ENCODE measurements at regions of chr16 and their contacts with region 1.

Region 1: DNA sequence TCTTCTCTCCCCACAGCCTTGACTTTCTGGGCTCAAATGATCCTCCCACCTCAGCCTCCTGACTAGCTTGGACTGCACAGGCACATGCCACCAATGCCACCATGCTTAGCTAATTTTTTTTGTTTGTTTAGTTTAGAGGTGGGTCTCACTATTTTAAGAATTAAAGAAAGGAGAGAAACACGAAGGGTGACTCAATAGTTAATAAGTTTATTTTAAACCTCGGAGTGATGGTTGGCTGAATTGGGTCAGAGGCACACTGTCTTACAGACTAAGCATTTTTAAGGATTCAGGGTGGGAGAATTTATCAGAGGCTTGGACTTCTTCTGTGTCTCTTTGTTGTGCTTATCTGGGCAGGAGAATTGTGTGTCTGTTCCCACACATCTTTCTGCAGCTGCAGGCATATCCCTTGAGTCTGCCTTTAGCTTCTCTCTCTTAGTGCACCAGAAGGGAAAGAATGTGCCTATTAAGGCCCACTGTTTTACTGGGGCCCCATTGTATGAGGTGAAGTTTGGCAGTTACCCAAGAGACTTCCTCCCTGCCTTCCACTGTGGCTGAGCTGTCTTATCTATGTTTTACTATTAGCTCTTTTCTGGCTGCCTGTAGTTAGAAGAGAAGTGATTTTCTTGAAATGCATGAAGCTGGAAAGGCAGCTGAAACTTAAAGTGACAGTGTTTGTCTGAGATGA is 2172.0 kb downstream of the TP53TG3F start:
- DNase-seq: no peak
- H3K4me3 ChIP-seq: no peak overlapping the region
- H3K27ac ChIP-seq: no peak overlapping the region
- H3K4me1 ChIP-seq: no peaks in the 10 kb centered on the region
- H3K27me3 ChIP-seq: no peaks in the 10 kb centered on the region
- CTCF ChIP-seq: no peak

Region 2: GRCh38 chr16:35325936-35326335 is 305.5 kb before region 1 on chr16:
- CTCF ChIA-PET with region 1: no interaction called
- dilution Hi-C with region 1: no loop called
- in situ Hi-C with region 1: no loop called
- intact Hi-C with region 1: no loop called
- DNase-seq: no peak
- H3K4me3 ChIP-seq: no peak overlapping the region
- H3K27ac ChIP-seq: no peak overlapping the region
- H3K4me1 ChIP-seq: no peaks in the 10 kb centered on the region
- H3K27me3 ChIP-seq: no peaks in the 10 kb centered on the region
- CTCF ChIP-seq: no peak

Region 3: DNA sequence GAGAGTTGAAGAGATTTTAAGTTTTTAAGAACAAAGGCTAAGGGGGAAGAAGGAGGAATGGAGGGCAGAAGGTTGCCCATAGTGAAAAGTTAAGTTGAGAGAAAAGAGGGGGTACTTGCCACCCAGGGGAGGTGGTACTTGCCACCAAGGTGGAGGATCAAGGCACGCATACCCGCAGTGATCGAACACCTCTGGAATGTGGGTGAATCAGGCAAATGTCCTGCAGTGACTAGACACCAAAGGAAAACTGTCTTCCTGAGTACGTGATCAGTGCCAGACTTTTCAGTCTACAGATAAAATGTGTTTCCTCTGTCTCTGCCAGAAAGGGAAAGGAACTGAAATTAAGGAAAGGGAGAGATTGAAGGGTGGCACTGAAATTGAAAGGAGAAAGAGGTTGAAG is 113.3 kb after region 1 on chr16:
- CTCF ChIA-PET with region 1: no interaction called
- dilution Hi-C with region 1: no loop called
- in situ Hi-C with region 1: loop called in 1 of 2 experiments (anchors 25 kb)
- intact Hi-C with region 1: no loop called
- DNase-seq: no peak
- H3K4me3 ChIP-seq: no peak overlapping the region
- H3K27ac ChIP-seq: no peak overlapping the region
- H3K4me1 ChIP-seq: no peaks in the 10 kb centered on the region
- H3K27me3 ChIP-seq: no peaks in the 10 kb centered on the region
- CTCF ChIP-seq: no peak